Prostate gland (tissue), 2 donors: ENCODE measurements at regions of chr4 and their contacts with region 1.

Region 1: DNA sequence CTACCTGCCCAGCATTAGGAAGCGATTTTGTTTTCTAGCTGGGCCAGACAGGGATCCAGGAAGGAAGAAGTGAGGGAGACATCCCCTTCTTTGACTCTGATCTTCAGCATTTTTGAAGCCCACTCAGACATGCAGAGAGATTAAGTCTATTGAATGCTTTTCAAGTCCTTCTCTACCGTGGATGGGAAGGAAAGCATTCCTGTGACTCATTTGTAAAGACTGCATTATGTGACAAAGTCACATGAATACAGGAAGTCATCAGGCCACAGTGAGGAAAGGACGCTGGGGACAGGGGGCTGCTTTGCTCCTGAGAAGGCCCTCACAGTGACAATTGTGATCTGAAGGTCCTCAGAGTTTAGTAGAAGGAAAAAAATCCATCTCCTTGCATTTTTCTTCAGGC is 67.4 kb upstream of the GBA3 start:
- DNase-seq: no peak
- H3K4me3 ChIP-seq: no peak overlapping the region
- H3K27ac ChIP-seq: no peak overlapping the region
- H3K4me1 ChIP-seq: no peaks in the 10 kb centered on the region
- H3K27me3 ChIP-seq: no peaks in the 10 kb centered on the region
- CTCF ChIP-seq: no peak
- POLR2A ChIP-seq: no peak

Region 2: DNA sequence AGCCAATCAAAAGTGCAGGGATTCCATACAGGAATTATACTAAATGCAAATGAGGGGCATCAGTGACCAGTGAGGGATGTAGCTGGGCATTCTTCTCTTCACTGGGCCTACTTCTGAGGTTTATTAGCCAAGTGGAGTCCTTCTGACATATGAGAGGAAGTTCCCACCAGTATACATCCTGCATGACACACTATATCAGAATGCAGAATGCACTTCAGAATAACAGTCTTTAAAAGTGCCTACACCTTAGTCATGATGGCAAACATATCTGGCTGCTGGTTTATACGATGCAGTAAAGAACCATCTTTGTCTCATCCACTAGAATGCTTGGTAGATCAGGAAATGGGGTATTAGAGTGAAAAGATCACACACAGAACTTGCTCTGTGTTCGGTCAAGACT is 1444.8 kb after region 1 on chr4:
- intact Hi-C with region 1: loop called (anchors 10 kb)
- DNase-seq: no peak
- H3K4me3 ChIP-seq: no peak overlapping the region
- H3K27ac ChIP-seq: no peak overlapping the region
- H3K4me1 ChIP-seq: no peaks in the 10 kb centered on the region
- H3K27me3 ChIP-seq: no peaks in the 10 kb centered on the region
- CTCF ChIP-seq: no peak
- POLR2A ChIP-seq: no peak